GM23248 (cell line): ENCODE measurements at regions of chr1 and their contacts with region 1.

Region 1: DNA sequence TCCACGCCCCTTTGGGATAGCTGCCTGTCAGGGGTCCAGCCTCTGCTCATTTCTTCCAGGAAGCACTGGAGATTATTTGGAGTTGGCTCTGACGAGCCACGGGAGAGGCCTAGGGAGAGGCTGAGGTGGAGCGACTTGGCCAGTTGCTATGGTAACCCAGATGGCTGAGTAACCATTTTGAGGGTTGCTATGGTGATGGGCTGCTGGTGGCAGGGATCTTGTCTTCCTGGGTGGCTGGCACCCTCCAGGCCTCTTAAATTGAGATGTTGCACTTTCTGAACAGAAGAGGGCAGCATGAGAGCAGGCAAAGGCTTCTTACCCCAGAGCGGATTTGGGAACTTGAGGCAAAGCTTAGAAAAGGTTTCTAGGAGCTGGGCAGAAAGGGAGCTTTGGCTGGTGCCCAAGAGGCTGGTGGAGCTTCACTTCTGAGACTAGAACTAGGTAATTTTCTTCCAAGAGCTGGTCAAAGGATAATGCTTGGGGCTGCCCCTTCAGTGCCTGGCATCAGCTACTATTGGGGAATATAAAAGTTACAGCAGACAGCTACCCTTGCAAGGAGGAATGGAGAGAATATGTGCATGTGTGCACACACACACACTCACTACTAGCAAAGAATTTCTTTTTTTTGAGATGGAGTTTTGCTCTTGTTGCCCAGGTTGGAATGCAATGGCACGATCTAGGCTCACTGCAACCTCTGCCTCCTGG is 72.5 kb downstream of the NDUFS5 start:
- DNase-seq: peak; percentile 97
- H3K4me3 ChIP-seq: no peak overlapping the region
- H3K27ac ChIP-seq: peak overlapping the region; percentile 15; the same call in 1 of the 2 replicates
- H3K4me1 ChIP-seq: peaks cover 18% of the 10 kb centered on the region
- H3K27me3 ChIP-seq: no peaks in the 10 kb centered on the region

Region 2: GRCh38 chr1:39183503-39184353 is 85.0 kb after region 1 on chr1:
- in situ Hi-C with region 1: loop called (anchors 10 kb)
- DNase-seq: peak; percentile 83
- H3K4me3 ChIP-seq: no peak overlapping the region
- H3K27ac ChIP-seq: no peak overlapping the region
- H3K4me1 ChIP-seq: peaks cover 35% of the 10 kb centered on the region
- H3K27me3 ChIP-seq: no peaks in the 10 kb centered on the region

Region 3: DNA sequence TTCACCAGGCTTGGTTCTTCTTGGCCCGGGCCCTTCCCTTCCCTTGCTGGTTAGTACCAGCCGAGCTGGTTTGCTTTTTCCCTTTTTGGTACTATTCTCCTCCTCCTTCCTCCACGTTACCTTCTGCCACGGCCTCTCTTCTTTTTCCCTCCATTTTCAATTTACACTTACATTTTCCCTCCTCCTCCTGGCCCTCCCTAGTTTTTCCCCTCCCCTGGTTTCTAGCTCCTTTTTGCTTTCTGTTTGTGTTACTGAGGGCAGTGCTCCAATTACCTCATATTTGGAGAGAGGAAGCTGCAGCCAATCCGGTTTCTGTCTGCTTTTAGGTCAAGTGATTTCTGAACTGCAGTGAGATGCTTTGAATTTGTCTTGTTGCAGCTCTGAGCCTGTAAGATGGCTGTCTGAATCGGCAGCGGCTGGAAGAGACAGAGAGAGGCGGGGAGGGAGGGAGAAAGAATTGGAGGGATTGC is 169.4 kb after region 1 on chr1:
- in situ Hi-C with region 1: loop called (anchors 10 kb)
- DNase-seq: peak; percentile 91
- H3K4me3 ChIP-seq: peak overlapping the region; percentile 73
- H3K27ac ChIP-seq: peak overlapping the region; percentile 81
- H3K4me1 ChIP-seq: peaks cover 22% of the 10 kb centered on the region
- H3K27me3 ChIP-seq: no peaks in the 10 kb centered on the region

Region 4: GRCh38 chr1:39538588-39539465 is 440.1 kb after region 1 on chr1:
- in situ Hi-C with region 1: loop called (anchors 25 kb)
- DNase-seq: peak; percentile 84
- H3K4me3 ChIP-seq: no peak overlapping the region
- H3K27ac ChIP-seq: no peak overlapping the region
- H3K4me1 ChIP-seq: no peaks in the 10 kb centered on the region
- H3K27me3 ChIP-seq: no peaks in the 10 kb centered on the region